T-cell (primary cell): ENCODE measurements at regions of chr3 and their contacts with region 1.

Region 1: DNA sequence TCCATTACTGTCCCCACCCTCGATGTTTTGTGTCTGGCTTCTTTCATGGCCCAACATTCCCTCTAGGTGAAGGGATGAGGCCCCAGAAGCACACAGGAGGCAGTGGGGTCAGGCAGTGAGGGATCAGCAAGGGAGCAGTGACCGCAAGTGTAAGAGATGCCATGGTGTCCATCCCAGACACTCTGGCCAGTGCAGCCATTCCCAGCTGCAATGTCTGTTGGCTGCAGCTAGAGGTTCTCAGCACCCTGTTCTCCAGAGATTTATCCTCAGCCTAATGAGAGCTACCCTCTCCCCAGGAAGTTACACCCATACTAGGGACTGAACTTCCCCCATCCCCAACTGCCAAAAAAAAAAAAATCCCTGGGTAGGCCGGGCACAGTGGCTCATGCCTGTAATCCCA is 40.2 kb downstream of the TRANK1 start:
- DNase-seq: no peak
- ATAC-seq: no peak
- H3K4me3 ChIP-seq: no peak overlapping the region
- H3K4me3 Mint-ChIP-seq: peak overlapping the region in 2 of 3 donors; percentile 29 to 84
- H3K27ac ChIP-seq: peak overlapping the region; percentile 23
- H3K27ac Mint-ChIP-seq: peak overlapping the region; percentile 63 to 89
- H3K4me1 ChIP-seq: peaks cover 25 to 72% of the 10 kb centered on the region in 2 experiments
- H3K4me1 Mint-ChIP-seq: peaks cover 83 to 86% (median 86%) of the 10 kb centered on the region in 3 donors
- H3K27me3 ChIP-seq: no peaks in the 10 kb centered on the region
- H3K27me3 Mint-ChIP-seq: no peaks in the 10 kb centered on the region

Region 2: DNA sequence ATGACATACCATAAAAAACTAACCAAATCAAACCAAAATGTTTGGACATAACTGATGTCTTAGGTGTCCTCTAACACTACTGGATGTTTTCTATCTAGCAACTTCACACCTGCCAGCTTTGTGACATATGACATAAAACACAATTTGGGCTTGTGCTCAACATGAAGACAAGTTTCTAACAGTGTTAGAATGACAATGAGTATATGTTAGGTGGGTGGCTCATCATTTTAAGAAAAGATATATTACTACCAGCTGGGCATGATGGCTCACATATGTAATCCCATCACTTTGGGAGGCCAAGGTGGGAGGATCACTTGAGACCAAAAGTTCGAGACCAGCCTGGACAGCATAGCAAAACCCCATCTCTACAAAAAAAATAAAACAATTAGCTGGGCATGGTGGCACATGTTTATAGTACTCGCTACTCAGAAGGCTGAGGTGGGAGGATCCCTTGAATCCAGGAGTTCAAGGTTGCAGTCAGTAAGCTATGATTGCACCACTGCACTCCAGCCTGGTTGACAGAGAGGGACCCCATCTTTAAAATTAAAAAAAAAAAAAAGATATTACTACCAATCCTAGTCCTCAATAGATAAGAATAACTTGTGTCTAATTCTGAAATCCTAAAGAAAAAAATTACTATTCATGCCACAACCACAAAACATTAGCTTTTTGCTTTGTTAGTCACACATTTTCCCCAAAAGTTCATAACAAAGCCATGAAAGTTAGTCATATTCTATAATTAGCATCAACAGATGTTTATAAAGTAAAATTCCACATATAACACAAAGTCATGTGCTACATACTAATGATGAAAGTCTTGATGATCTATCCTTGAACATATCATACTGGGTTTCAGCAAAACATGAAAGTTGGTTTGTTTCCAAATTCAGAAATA is 209.9 kb after region 1 on chr3:
- CTCF ChIA-PET with region 1: no interaction called
- POLR2A ChIA-PET with region 1: no interaction called
- DNase-seq: no peak
- ATAC-seq: no peak
- H3K4me3 ChIP-seq: no peak overlapping the region
- H3K4me3 Mint-ChIP-seq: no peak overlapping the region
- H3K27ac ChIP-seq: no peak overlapping the region
- H3K27ac Mint-ChIP-seq: no peak overlapping the region
- H3K4me1 ChIP-seq: no peaks in the 10 kb centered on the region
- H3K4me1 Mint-ChIP-seq: peaks cover 0 to 3% (median 3%) of the 10 kb centered on the region in 3 donors
- H3K27me3 ChIP-seq: no peaks in the 10 kb centered on the region
- H3K27me3 Mint-ChIP-seq: no peaks in the 10 kb centered on the region

Region 3: DNA sequence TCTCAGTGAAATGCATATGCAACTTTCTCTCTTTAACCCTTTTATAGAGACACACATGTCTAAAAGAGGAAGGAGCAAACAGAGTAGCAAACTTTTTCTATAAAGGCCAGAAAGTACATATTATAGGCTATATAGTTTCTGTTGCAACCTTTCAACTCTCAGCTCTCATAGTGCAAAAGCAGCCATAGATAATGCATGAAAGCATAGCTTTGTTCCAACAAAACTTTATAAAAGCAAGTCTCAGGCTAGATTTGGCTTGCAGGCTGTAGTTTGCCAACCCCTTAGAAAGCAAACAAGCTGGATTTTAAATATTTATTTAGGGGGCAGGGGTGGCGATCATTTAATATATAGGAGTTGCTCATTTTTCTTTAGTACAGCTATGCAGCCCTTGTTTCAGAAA is 462.8 kb after region 1 on chr3:
- CTCF ChIA-PET with region 1: interaction called in 1 of 2 experiments, 14 read pairs
- POLR2A ChIA-PET with region 1: no interaction called
- DNase-seq: no peak
- ATAC-seq: no peak
- H3K4me3 ChIP-seq: no peak overlapping the region
- H3K4me3 Mint-ChIP-seq: no peak overlapping the region
- H3K27ac ChIP-seq: no peak overlapping the region
- H3K27ac Mint-ChIP-seq: no peak overlapping the region
- H3K4me1 ChIP-seq: no peaks in the 10 kb centered on the region
- H3K4me1 Mint-ChIP-seq: no peaks in the 10 kb centered on the region
- H3K27me3 ChIP-seq: no peaks in the 10 kb centered on the region
- H3K27me3 Mint-ChIP-seq: no peaks in the 10 kb centered on the region